ENCODE measurements at regions of chr11 and their contacts with region 1.

Region 1: DNA sequence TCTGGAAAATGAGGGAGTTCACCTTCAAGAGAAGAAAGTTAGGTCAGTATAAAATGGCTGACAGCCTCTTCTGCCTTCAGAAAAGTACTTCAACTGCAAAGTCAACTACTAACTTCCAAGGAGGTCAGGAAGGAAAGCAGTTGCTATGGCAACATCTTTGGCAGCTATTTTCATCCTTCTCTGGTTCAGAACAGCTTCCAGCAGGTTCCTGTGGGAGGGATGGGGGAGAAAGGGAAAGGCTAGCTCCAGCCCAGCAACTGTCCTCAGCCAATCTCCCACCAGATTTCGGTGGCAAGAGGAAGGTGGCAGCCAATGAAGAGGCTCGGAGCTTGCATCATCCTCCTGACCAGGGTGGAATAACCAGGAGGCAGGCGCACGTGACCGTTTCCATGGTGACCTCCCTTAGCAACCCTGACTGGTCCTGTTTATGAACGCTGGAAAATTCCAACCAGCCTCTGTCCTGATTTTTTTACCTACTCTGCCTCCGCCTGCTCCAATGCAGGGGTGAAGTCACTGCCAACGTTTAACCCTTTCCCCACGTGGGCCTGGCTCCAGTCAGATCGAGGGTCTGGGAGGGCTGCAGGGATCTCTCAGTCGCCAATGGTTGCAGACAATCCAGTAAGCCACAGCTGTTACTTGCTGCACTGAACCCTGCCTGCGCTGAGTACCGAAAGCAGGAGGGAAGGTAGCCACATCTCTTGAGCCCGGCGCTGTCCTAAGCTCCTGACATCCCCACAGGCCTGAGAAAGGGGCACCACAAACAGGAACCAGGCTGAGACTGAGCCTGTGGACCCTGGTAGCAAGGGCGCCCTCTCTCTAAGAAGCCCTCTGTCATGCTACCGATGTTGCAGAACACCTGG is 11.2 kb upstream of the MALAT1 start:
- DNase-seq: no peak
- H3K4me3 ChIP-seq: no peak overlapping the region
- H3K4me3 Mint-ChIP-seq: no peak overlapping the region
- H3K27ac ChIP-seq: no peak overlapping the region
- H3K27ac Mint-ChIP-seq: peak overlapping the region in 1 of 8 donors; percentile 29
- H3K4me1 ChIP-seq: no peaks in the 10 kb centered on the region
- H3K4me1 Mint-ChIP-seq: peaks cover 0 to 3% (median 2%) of the 10 kb centered on the region in 3 donors
- H3K27me3 ChIP-seq: no peaks in the 10 kb centered on the region
- H3K27me3 Mint-ChIP-seq: peaks cover 0 to 3% of the 10 kb centered on the region in 2 donors

Region 2: DNA sequence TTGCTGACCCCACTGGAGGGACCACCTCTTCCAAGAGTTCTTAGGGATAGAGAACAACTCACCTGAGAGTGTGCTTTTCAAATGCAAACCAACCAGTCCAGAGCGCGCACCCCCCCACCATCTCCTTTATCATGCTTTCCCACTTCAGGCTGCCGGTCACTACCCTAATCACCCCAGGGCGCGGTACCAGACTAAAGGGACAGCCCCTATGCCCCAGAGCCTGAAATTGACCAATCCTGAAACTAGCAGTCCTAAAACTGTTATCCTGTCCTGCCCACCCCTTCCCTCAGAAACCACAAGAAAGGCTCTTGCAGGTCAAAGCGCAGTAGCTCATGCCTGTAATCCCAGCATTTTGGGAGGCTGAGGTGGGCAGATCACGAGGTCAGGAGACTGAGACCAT is 28.1 kb before region 1 on chr11:
- CTCF ChIA-PET with region 1: interaction called, 4 read pairs
- POLR2A ChIA-PET with region 1: interaction called, 10 read pairs
- DNase-seq: peak in 1 of 5 donors; percentile 28
- H3K4me3 ChIP-seq: no peak overlapping the region
- H3K4me3 Mint-ChIP-seq: peak overlapping the region in 1 of 7 donors; percentile 20
- H3K27ac ChIP-seq: no peak overlapping the region
- H3K27ac Mint-ChIP-seq: no peak overlapping the region
- H3K4me1 ChIP-seq: peaks cover 5% of the 10 kb centered on the region
- H3K4me1 Mint-ChIP-seq: peaks cover 13 to 23% (median 20%) of the 10 kb centered on the region in 3 donors
- H3K27me3 ChIP-seq: no peaks in the 10 kb centered on the region
- H3K27me3 Mint-ChIP-seq: no peaks in the 10 kb centered on the region

Region 3: DNA sequence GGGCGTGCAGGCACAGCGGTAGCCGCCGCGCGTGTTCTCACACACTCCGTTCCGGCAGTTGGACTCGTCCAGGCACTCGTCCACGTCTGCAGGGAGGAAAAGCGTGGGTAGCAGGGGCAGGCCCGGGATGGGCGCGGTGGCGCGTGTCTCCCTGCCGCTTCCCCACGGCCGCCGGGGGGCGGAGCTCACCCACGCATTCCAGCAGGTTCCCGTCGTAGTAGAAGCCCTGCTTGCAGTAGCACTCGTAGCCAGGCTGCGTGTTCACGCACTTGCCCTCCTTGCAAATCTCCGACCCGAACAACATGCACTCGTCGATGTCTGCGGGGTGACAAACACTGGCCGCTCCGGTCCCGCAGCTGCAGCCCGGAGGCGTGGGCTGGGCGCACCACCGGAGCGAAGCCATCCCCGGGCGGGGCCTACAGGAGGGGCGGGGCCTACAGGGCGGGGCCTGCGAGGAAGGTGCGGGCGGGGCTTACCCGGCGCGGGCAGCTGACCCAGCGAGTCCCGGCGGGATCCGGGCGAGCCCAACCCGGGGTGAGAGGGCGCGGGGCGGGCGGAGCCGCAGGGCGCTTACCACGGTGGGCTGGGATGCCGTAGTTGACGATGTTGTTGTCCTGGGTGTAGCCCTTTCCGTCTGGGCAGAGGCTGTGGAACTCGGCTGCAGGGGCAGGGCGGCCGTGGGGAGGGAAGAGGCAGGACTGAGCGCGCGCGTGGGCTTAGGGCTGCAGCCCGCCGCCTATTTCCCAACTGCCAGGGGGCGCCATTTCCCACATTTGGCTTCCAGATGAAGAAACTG is 52.9 kb after region 1 on chr11:
- CTCF ChIA-PET with region 1: no interaction called
- POLR2A ChIA-PET with region 1: no interaction called
- DNase-seq: peak; percentile 82 to 92 (median 89)
- H3K4me3 ChIP-seq: peak overlapping the region; percentile 74
- H3K4me3 Mint-ChIP-seq: peak overlapping the region; percentile 82 to 94 (median 87)
- H3K27ac ChIP-seq: peak overlapping the region; percentile 44
- H3K27ac Mint-ChIP-seq: peak overlapping the region; percentile 78 to 93 (median 84)
- H3K4me1 ChIP-seq: peaks cover 11% of the 10 kb centered on the region
- H3K4me1 Mint-ChIP-seq: peaks cover 13 to 20% (median 14%) of the 10 kb centered on the region in 3 donors
- H3K27me3 ChIP-seq: no peaks in the 10 kb centered on the region
- H3K27me3 Mint-ChIP-seq: no peaks in the 10 kb centered on the region

Measured in CD8-positive, alpha-beta memory T cell (primary cell).